ENCODE measurements at regions of chr15 and their contacts with region 1.

Region 1: GRCh38 chr15:45037936-45038335 is 14.9 kb downstream of the SORD start:
- DNase-seq: no peak
- H3K4me3 ChIP-seq: no peak overlapping the region
- H3K4me3 Mint-ChIP-seq: no peak overlapping the region
- H3K27ac Mint-ChIP-seq: no peak overlapping the region
- H3K4me1 ChIP-seq: 0 out of 2 replicates have a peak, but pooled peaks cover 5% of the 10 kb centered on the region
- H3K4me1 Mint-ChIP-seq: peaks cover 12% of the 10 kb centered on the region
- H3K27me3 ChIP-seq: no peaks in the 10 kb centered on the region
- H3K27me3 Mint-ChIP-seq: no peaks in the 10 kb centered on the region
- CTCF ChIP-seq: no peak

Region 2: GRCh38 chr15:44968475-44968874 is 69.5 kb before region 1 on chr15:
- CTCF ChIA-PET with region 1: interaction called, 9 read pairs
- POLR2A ChIA-PET with region 1: no interaction called
- intact Hi-C with region 1: loop called (anchors 2 kb)
- DNase-seq: no peak
- H3K4me3 ChIP-seq: no peak overlapping the region
- H3K4me3 Mint-ChIP-seq: no peak overlapping the region
- H3K27ac Mint-ChIP-seq: no peak overlapping the region
- H3K4me1 ChIP-seq: no peaks in the 10 kb centered on the region
- H3K4me1 Mint-ChIP-seq: no peaks in the 10 kb centered on the region
- H3K27me3 ChIP-seq: no peaks in the 10 kb centered on the region
- H3K27me3 Mint-ChIP-seq: no peaks in the 10 kb centered on the region
- CTCF ChIP-seq: no peak

Region 3: GRCh38 chr15:45100884-45101622 is 63.1 kb after region 1 on chr15:
- CTCF ChIA-PET with region 1: no interaction called
- POLR2A ChIA-PET with region 1: no interaction called
- intact Hi-C with region 1: no loop called
- DNase-seq: no peak
- H3K4me3 ChIP-seq: no peak overlapping the region
- H3K4me3 Mint-ChIP-seq: no peak overlapping the region
- H3K27ac Mint-ChIP-seq: no peak overlapping the region
- H3K4me1 ChIP-seq: no peaks in the 10 kb centered on the region
- H3K4me1 Mint-ChIP-seq: no peaks in the 10 kb centered on the region
- H3K27me3 ChIP-seq: no peaks in the 10 kb centered on the region
- H3K27me3 Mint-ChIP-seq: no peaks in the 10 kb centered on the region
- CTCF ChIP-seq: no peak

Region 4: GRCh38 chr15:45429974-45430792 is 392.2 kb after region 1 on chr15:
- CTCF ChIA-PET with region 1: no interaction called
- POLR2A ChIA-PET with region 1: no interaction called
- intact Hi-C with region 1: no loop called
- DNase-seq: peak; percentile 61 to 87
- H3K4me3 ChIP-seq: peak overlapping the region; percentile 66
- H3K4me3 Mint-ChIP-seq: peak overlapping the region; percentile 61
- H3K27ac Mint-ChIP-seq: no peak overlapping the region
- H3K4me1 ChIP-seq: peaks cover 8% of the 10 kb centered on the region; the same call in 1 of the 2 replicates
- H3K4me1 Mint-ChIP-seq: no peaks in the 10 kb centered on the region
- H3K27me3 ChIP-seq: no peaks in the 10 kb centered on the region
- H3K27me3 Mint-ChIP-seq: no peaks in the 10 kb centered on the region
- CTCF ChIP-seq: peak; percentile 99 to 100